Posterior cingulate gyrus (tissue), 11 donors: ENCODE measurements at regions of chr5 and their contacts with region 1.

Region 1: DNA sequence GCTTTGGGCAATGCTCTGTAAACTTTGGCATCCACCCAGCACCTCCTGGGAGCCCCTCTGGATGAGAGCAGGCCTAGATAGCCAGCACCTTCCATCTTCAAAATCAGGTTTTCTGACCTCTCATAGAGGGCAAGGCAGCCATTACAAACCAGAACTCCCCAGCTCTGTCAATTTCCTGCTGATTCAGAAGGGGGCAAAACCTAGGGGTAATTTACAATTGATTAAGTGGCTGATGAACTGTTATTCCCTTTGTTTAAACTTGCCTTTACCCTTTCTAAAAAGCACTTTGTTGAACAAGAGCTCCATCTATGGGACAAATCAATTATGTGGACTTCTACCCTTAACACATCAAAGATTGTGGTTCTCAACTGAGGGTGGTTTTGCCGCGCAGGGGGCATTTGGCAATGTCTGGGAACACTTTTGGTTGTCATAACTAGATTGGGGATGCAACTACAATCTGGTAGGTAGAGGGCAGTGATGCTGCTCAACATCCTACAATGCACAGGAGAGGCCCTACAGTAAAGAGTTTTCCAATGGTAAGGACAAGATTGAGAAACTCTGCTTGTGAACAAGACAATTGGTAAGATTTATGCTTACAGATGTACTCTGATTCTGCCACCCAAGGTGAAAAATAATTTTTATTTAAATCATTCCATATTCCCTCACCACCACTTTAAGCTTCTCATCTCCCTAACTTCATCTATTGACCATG is 184.1 kb downstream of the MARCHF11 start:
- DNase-seq: peak in 1 of 10 donors; percentile 55

Region 2: DNA sequence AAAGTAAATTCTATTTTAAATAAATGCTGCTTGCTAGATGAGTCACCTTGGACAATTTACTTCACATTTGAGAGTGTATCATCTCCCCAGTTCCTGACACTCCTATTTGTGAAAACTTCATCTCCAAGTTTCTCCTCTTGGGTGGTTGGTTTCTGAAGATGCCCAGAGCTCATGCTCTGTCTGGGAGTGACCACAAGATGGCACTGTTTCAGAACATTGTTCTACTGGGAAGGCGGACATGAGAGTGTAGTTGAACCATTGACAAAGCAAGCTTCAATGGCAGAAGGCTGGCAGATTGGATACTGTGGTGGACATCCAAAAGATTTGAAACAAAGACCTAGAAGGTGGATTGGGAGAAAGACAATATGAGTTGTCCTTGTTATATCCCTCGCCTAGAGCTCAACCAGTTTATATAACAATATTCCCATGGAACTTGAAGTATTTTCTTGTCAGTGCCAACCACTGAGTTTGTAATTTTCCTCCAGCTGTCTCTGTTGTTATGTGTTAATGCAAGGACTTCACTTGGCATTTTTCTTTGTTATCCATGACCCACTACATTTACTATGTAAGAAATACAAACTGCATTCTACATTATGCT is 889.6 kb before region 1 on chr5:
- intact Hi-C with region 1: loop called (anchors 2 kb)
- DNase-seq: peak in 6 of 10 donors; percentile 26 to 85 (median 52)

Region 3: DNA sequence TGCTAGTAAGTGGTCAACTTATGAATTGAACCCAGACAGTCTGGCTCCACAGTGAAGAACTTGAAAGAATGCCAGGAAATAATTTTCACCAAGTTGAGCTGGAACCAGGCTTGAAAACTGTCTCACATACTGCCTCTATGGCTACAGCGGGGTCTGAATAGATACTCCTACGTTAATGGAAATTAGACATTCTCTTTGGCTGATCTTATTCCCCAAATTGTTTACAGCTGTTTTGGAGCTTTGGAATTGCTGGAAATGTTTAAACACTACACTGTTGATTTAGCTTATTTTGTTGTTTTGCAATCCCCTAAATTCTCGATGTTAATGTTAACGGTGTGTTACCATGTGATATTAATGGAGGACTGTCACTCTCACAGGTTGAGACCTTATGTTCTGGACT is 349.1 kb before region 1 on chr5:
- intact Hi-C with region 1: no loop called
- DNase-seq: no peak

Region 4: DNA sequence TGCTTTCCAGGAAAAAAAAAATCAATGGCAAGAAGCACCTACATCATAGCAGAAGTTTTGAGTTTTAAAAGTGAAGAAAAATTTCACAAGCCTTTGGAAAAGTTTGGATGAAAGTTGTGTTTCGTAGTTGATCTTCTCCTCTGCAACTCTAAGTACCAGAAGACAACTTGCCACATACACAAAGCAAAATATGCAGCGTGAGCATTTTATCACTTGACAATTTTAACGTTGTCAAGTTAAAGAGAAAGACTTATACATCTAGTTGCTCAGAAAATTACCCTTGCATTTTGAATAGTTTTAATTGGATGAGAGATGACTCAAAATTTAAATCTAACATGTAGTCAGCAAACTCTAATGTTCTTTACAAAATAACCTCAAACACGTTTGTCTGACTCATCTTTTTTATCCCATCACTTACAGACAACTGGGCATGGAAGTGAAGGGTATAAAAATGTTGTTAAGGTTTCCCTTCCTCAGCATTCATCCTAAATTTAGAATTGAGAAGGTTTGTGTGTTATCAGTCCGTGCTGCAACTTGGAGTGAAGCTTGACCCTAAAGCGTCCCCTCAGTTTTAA is 29.3 kb before region 1 on chr5:
- intact Hi-C with region 1: no loop called
- DNase-seq: no peak